A673 (cell line): ENCODE measurements at regions of chr20 and their contacts with region 1.

Region 1: DNA sequence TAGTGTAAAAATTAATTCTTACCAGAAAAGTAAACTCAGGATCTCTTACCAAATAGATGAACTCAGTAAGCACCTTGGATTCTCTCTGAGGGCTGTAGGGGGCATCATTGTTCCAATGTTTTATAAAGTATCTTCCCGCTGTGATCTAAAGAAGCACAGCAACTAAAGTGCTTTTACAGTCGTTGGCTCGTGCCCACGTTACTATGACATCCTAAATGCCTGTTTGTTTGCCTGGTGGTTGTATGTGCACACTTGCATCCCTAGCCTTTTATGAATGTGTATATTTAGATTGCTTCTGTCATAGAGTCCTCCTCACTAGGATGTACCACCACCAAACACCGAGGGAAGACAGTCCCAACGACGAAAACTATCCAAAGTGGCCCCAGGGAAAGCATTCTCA is 34.5 kb downstream of the SLX4IP start:
- DNase-seq: peak; percentile 96
- H3K4me3 ChIP-seq: peak overlapping the region; percentile 8
- H3K27ac ChIP-seq: peak overlapping the region; percentile 66
- H3K4me1 ChIP-seq: peaks cover 67% of the 10 kb centered on the region
- H3K27me3 ChIP-seq: no peaks in the 10 kb centered on the region
- CTCF ChIP-seq: peak; percentile 80

Region 2: DNA sequence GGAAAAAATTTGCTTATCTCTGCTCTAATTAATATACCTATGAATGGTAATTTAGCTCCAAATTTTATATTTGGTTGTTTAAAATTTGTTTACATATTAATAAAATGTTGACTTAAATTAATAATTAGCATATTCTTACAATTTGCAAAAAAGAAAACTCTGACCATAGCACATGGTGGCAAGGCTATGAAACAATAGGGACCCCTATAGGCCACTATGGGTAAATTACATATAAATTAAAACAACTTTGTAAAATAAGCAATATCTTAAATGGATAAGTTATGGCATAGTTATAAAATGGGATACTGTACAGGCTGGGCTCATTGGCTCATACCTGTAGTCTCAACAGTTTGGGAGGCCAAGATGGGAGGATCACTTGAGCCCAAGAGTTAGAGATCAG is 111.6 kb before region 1 on chr20:
- CTCF ChIA-PET with region 1: no interaction called
- POLR2A ChIA-PET with region 1: no interaction called
- intact Hi-C with region 1: loop called (anchors 1 kb)
- DNase-seq: peak; percentile 28
- H3K4me3 ChIP-seq: no peak overlapping the region
- H3K27ac ChIP-seq: no peak overlapping the region
- H3K4me1 ChIP-seq: peaks cover 8% of the 10 kb centered on the region
- H3K27me3 ChIP-seq: no peaks in the 10 kb centered on the region
- CTCF ChIP-seq: peak; percentile 73

Region 3: DNA sequence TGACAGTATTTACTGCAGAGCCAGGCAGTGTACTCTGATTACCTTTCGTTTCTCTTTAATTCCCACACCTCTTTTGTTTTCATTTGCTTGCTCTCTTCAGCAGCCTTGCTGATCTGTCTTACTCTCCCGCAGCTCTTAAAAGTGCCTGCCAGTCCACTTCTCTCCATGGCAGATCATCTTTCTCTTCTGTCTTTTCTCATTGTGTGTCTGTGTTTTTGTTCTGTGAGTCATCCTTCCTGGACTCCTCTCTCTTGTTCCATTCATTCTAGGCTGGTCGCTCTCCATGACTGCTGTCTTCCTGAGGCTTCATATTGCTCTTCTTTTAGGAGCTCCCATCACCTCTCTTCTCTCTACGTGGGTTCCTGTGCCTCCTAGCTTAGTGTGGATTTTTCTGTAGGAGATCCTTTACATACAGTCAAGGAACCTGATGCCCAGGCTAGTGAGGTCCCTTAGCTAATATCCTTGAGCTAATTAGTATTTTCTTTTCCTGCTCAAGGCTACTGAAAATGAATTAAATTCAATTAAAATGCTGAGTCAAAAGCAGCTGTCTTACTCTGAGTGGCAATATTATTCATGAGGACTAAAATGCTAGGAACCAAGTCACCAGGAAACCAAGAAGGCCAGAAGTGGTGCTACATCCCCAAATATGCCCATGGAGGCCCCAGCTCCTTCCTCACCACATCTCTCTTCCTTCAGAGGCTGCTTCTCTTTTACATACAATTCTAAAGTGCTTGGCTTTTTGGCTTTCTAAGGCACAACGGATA is 51.7 kb after region 1 on chr20:
- CTCF ChIA-PET with region 1: no interaction called
- POLR2A ChIA-PET with region 1: interaction called, 3 read pairs
- intact Hi-C with region 1: loop called (anchors 5 kb)
- DNase-seq: peak; percentile 84
- H3K4me3 ChIP-seq: peak overlapping the region; percentile 13
- H3K27ac ChIP-seq: peak overlapping the region; percentile 89
- H3K4me1 ChIP-seq: peaks cover 65% of the 10 kb centered on the region
- H3K27me3 ChIP-seq: no peaks in the 10 kb centered on the region
- CTCF ChIP-seq: no peak

Region 4: GRCh38 chr20:10654630-10655029 is 185.0 kb after region 1 on chr20:
- CTCF ChIA-PET with region 1: no interaction called
- POLR2A ChIA-PET with region 1: no interaction called
- intact Hi-C with region 1: loop called (anchors 5 kb)
- DNase-seq: no peak
- H3K4me3 ChIP-seq: no peak overlapping the region
- H3K27ac ChIP-seq: no peak overlapping the region
- H3K4me1 ChIP-seq: peaks cover 47% of the 10 kb centered on the region
- H3K27me3 ChIP-seq: no peaks in the 10 kb centered on the region
- CTCF ChIP-seq: no peak

Region 5: DNA sequence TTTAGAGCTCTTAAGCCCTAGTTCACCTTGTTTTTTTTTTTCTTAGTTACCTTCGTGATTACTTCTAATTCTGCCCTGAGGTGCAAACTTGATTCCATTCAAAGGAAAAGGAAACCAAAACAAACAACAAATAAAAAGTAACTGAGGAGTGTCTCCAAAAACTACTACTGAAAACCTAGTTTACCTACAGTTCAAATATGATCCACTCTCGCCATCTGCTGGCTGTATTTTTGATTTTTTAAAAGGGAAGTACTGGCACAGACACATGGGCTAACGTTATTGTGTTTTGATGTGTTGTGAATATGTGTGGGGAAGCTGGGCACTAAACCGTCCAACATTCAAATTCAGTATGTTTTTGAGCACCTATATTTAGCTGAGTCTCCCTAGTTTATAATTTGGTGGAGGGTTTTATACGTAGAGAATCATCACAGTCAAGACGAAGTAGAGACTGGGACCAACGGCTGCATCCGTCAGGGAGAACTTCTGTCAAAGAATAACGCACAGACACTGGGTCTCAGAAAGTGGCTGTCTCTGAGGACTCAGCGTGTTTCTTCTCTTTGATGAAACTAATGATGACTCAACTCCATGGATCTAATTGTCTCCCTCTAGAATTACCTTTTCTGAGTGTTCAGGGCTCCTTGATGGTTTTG is 1074.6 kb after region 1 on chr20:
- CTCF ChIA-PET with region 1: no interaction called
- POLR2A ChIA-PET with region 1: no interaction called
- intact Hi-C with region 1: loop called (anchors 5 kb)
- DNase-seq: peak; percentile 85
- H3K4me3 ChIP-seq: no peak overlapping the region
- H3K27ac ChIP-seq: no peak overlapping the region
- H3K4me1 ChIP-seq: peaks cover 7% of the 10 kb centered on the region
- H3K27me3 ChIP-seq: no peaks in the 10 kb centered on the region
- CTCF ChIP-seq: peak; percentile 65